ENCODE measurements at regions of chr18 and their contacts with region 1.

Region 1: GRCh38 chr18:22169007-22169864 is at the start of gene GATA6:
- DNase-seq: peak; percentile 77 to 84
- H3K4me3 ChIP-seq: peak within 1 kb of the TSS; percentile 73
- H3K27ac ChIP-seq: peak within 1 kb of the TSS; percentile 74
- H3K4me1 ChIP-seq: peaks cover 22% of the 10 kb centered on the region
- H3K27me3 ChIP-seq: no peaks in the 10 kb centered on the region
- CTCF ChIP-seq: peak; percentile 45; the same call in 1 of the 2 replicates
- total RNA-seq, gene GATA6: 9.1 and 12.3 TPM in 2 replicates

Region 2: DNA sequence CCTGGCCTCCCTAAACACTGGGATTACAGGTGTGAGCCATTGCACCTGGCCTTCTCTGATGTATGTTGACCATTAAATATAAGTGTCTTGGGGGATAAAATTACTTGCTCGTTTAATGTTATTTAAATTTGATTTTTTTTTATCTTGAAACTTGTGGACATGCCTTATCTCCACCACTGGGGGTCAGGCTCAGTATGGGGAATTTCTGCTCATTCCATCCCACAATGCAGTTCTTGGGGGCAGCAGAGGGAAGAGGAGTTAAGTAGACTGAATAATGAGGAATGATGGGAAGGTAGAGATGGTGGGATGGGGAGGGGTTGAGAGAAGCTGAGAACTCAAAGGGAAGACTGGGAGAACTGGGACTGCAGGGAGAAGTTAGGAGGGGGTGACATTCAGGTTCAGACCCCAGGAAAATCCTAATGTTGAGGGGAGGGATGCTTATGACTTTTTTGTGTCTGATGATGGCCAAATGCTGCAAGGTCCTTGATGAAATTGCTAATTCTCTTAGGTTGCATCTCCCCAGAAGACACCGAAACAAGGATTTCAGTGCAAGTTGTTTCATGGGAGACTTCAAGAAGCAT is 254.4 kb before region 1 on chr18:
- CTCF ChIA-PET with region 1: no interaction called
- POLR2A ChIA-PET with region 1: no interaction called
- intact Hi-C with region 1: loop called (anchors 5 kb)
- DNase-seq: peak in 1 of 2 experiments; percentile 15
- H3K4me3 ChIP-seq: no peak overlapping the region
- H3K27ac ChIP-seq: no peak overlapping the region
- H3K4me1 ChIP-seq: no peaks in the 10 kb centered on the region
- H3K27me3 ChIP-seq: no peaks in the 10 kb centered on the region
- CTCF ChIP-seq: peak; percentile 78

Region 3: DNA sequence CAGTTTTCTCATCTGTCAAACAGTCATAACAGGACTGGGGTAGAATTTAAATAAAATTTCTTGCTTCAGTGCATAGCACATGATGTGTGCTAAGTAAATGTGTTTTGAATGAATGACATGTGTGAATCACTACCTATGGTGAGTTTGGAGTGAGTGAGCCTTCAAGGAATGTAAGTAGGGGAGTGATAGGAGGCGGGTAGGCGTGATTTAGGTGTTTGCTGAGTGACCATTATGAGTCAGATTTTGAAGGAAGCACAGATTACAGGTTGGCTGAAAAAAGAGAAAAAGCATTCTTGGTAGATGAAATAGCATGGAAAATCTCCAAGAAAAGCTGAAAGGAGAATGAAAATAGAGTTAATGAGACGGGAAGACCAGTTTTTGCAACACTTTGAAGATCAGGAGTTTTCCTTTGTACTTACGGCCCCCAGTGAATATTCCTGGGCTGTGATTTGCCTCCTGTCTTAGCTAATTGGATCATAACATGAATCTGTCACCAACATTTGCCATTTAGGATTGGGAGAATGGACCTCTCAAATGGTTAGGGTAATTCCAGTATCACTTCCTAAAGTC is 136.8 kb before region 1 on chr18:
- CTCF ChIA-PET with region 1: no interaction called
- POLR2A ChIA-PET with region 1: no interaction called
- intact Hi-C with region 1: loop called (anchors 5 kb)
- DNase-seq: peak; percentile 45 to 95
- H3K4me3 ChIP-seq: no peak overlapping the region
- H3K27ac ChIP-seq: peak overlapping the region; percentile 86
- H3K4me1 ChIP-seq: peaks cover 16% of the 10 kb centered on the region
- H3K27me3 ChIP-seq: no peaks in the 10 kb centered on the region
- CTCF ChIP-seq: no peak

Region 4: GRCh38 chr18:22108674-22109073 is 60.6 kb before region 1 on chr18:
- CTCF ChIA-PET with region 1: no interaction called
- POLR2A ChIA-PET with region 1: no interaction called
- intact Hi-C with region 1: loop called (anchors 10 kb)
- DNase-seq: peak; percentile 4 to 34
- H3K4me3 ChIP-seq: no peak overlapping the region
- H3K27ac ChIP-seq: no peak overlapping the region
- H3K4me1 ChIP-seq: peaks cover 20% of the 10 kb centered on the region
- H3K27me3 ChIP-seq: no peaks in the 10 kb centered on the region
- CTCF ChIP-seq: no peak; the same call in 1 of the 2 replicates

Region 5: GRCh38 chr18:22282311-22283112 is 113.3 kb after region 1 on chr18:
- CTCF ChIA-PET with region 1: interaction called, 3 read pairs
- POLR2A ChIA-PET with region 1: no interaction called
- intact Hi-C with region 1: loop called (anchors 10 kb)
- DNase-seq: peak; percentile 40 to 96
- H3K4me3 ChIP-seq: peak overlapping the region; percentile 19; the same call in 1 of the 2 replicates
- H3K27ac ChIP-seq: peak overlapping the region; percentile 76
- H3K4me1 ChIP-seq: peaks cover 35% of the 10 kb centered on the region
- H3K27me3 ChIP-seq: no peaks in the 10 kb centered on the region
- CTCF ChIP-seq: no peak

Region 6: DNA sequence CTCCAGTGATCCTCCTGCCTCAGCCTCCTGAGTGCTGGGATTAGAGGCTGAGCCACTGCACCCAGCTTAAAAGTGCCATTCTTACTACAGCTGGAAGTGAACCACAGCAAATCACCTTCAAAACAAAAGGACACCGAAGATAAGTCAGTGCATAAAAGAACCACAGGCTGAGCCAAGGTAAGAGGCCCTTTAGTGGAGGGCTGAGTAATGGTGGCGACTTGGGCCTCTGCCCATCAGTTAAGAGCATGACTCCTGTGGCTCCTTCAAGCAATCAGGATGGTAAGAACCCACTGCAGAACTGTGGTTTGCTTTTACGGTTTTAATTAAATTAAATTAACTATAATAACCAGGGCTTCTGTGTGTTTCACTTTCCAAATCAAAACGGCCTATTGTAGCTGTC is 173.4 kb after region 1 on chr18:
- CTCF ChIA-PET with region 1: no interaction called
- POLR2A ChIA-PET with region 1: no interaction called
- intact Hi-C with region 1: no loop called
- DNase-seq: peak; percentile 72
- H3K4me3 ChIP-seq: no peak overlapping the region
- H3K27ac ChIP-seq: no peak overlapping the region
- H3K4me1 ChIP-seq: peaks cover 38% of the 10 kb centered on the region
- H3K27me3 ChIP-seq: no peaks in the 10 kb centered on the region
- CTCF ChIP-seq: no peak

Region 7: DNA sequence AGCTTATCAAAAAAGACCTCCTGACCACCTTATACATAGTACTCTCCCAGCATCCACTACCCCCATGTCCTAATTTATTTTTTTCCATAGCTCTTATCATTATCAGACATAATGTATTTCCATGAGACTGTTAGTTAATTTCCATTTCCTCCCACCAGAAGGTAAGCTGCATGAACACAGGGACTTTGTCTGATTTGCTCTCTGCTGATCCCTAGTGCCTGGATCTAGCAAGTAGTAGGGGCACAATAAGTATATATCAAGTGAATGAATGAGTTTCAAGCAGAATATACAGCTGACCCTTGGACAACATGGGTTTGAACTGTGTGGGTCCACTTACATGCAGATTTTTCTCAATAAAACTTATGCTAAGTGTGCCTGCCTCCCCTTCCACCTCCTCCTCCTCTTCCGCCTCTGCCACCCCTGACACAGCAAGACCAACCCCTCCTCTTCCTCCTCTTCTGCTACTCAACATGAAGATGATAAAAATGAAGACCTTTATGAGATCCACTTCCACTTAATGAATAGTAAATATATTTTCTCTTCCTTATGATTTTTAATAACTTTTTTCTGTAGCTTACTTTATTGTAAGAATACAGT is 194.7 kb after region 1 on chr18:
- CTCF ChIA-PET with region 1: no interaction called
- POLR2A ChIA-PET with region 1: no interaction called
- intact Hi-C with region 1: loop called (anchors 5 kb)
- DNase-seq: no peak
- H3K4me3 ChIP-seq: no peak overlapping the region
- H3K27ac ChIP-seq: no peak overlapping the region
- H3K4me1 ChIP-seq: no peaks in the 10 kb centered on the region; the same call in 1 of the 2 replicates
- H3K27me3 ChIP-seq: no peaks in the 10 kb centered on the region
- CTCF ChIP-seq: no peak; the same call in 1 of the 2 replicates

Region 8: DNA sequence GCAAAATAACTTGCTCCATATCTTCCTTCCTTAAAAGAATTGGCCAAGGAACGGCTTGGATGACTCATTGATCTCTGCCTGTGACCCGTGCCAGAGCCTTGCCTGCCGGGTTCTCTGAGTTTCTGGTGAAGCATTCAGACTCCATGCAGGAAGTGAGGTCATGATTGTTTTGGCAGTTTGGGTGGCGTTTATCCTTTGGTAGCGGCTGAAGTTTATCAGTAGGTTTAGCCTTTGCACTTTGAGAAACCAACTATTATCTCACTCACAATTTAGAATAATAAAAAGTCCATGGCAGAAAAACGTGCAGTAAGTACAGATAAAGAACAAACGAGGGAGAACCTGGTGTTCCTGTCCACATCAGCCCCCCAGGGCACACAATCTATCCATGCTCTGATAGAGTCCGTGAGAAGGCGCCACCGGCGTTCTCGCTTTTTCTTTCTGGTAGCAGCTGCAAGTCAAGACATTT is 263.5 kb after region 1 on chr18:
- CTCF ChIA-PET with region 1: no interaction called
- POLR2A ChIA-PET with region 1: no interaction called
- intact Hi-C with region 1: no loop called
- DNase-seq: peak; percentile 60 to 81
- H3K4me3 ChIP-seq: 0 out of 2 replicates have a peak overlapping the region, but pooled peaks have one; percentile 12
- H3K27ac ChIP-seq: peak overlapping the region; percentile 45
- H3K4me1 ChIP-seq: peaks cover 23% of the 10 kb centered on the region
- H3K27me3 ChIP-seq: no peaks in the 10 kb centered on the region
- CTCF ChIP-seq: no peak

Region 9: DNA sequence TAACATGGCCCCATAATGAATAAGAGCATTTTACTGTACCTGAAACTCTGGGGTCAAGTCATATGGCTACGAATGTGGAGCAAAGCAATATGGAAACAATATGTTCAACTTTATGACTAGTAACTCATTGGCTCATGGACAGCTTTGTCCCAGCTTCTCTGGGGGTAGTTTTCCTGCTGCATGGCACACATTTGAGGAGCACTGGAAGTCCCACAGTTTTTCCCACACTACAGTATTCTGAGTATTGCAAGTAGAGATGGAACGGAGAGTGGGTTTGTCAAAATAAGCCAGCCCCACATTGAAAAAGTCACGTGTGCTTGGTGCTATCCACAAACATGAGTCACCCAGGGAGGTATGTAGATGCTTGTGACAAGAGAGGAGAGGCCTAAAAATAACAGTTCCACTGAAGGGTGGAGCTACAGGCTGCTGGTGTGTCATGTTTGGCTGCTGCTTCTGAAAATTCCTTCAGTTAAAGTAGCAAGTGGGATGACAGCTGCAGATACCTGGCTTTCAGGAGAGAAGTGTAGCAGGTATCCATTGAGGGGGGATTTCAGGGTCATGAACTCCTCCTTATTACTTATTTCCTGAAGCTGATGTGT is 296.7 kb after region 1 on chr18:
- CTCF ChIA-PET with region 1: no interaction called
- POLR2A ChIA-PET with region 1: no interaction called
- intact Hi-C with region 1: loop called (anchors 1 kb)
- DNase-seq: peak; percentile 50 to 91
- H3K4me3 ChIP-seq: peak overlapping the region; percentile 52; the same call in 1 of the 2 replicates
- H3K27ac ChIP-seq: peak overlapping the region; percentile 100
- H3K4me1 ChIP-seq: peaks cover 39% of the 10 kb centered on the region
- H3K27me3 ChIP-seq: no peaks in the 10 kb centered on the region
- CTCF ChIP-seq: no peak

Measured in PC-9 (cell line).